ENCODE measurements at regions of chr15 and their contacts with region 1.

Region 1: GRCh38 chr15:31326156-31326732 is 391 bp upstream of the KLF13 start:
- DNase-seq: peak; percentile 100
- H3K4me3 Mint-ChIP-seq: peak overlapping the region; percentile 88
- H3K27ac Mint-ChIP-seq: peak overlapping the region; percentile 80
- H3K4me1 Mint-ChIP-seq: peaks cover 32% of the 10 kb centered on the region
- H3K27me3 Mint-ChIP-seq: no peaks in the 10 kb centered on the region

Region 2: DNA sequence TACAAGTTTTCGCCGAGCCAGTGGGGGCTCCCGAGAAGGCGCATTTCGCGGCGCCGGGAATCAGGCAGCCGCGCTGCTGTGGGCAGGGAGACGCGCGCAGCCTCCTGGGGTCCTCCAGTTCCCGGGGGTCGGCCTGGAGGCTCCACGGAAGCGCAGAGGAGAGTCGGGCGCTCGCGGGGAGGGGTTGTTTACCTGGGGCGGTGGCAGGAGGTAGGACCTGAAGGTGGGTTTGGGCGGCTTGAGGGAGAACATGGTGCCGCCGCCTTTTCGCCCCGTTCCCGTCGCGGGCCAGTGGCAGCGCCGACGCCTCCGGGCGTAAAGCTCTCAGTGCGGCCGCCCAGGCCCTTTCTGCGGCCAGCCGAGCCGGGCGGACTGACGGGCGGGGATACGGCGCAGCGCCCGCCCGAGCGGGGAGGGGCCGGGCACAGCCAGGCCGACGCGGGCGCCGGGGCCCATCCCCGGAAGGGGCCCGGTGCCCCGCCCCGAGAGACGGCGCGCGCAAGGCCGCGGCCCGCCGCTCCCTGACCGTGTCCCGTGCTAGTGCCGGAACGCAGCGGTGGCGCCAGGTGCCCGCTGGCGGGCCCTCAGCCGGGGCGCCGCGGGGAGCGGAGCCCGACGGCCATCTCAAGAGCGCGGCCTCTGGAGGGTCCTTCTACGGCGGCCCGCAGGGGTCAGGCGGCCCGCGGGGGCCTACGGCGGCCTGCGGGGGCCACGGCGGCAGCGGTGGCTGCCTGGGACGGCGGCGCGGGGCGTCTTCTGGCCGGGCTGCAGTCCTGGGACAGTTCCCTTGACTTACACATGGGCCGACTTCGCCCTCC is 334.8 kb before region 1 on chr15 and contains the start of gene MTMR10:
- CTCF ChIA-PET with region 1: no interaction called
- POLR2A ChIA-PET with region 1: no interaction called
- intact Hi-C with region 1: loop called (anchors 10 kb)
- DNase-seq: peak; percentile 76
- H3K4me3 Mint-ChIP-seq: peak within 1 kb of the TSS; percentile 87
- H3K27ac Mint-ChIP-seq: peak within 1 kb of the TSS; percentile 72
- H3K4me1 Mint-ChIP-seq: peaks cover 26% of the 10 kb centered on the region
- H3K27me3 Mint-ChIP-seq: no peaks in the 10 kb centered on the region
- total RNA-seq, gene MTMR10: 10.8 to 12.5 TPM

Region 3: GRCh38 chr15:31215490-31216214 is 110.6 kb before region 1 on chr15:
- CTCF ChIA-PET with region 1: interaction called, 9 read pairs
- POLR2A ChIA-PET with region 1: interaction called, 13 read pairs
- intact Hi-C with region 1: loop called (anchors 1 kb)
- DNase-seq: peak; percentile 88
- H3K4me3 Mint-ChIP-seq: peak overlapping the region; percentile 68
- H3K27ac Mint-ChIP-seq: peak overlapping the region; percentile 56
- H3K4me1 Mint-ChIP-seq: peaks cover 15% of the 10 kb centered on the region
- H3K27me3 Mint-ChIP-seq: no peaks in the 10 kb centered on the region

Region 4: GRCh38 chr15:31265871-31266711 is 60.2 kb before region 1 on chr15:
- CTCF ChIA-PET with region 1: interaction called, 4 read pairs
- POLR2A ChIA-PET with region 1: no interaction called
- intact Hi-C with region 1: loop called (anchors 1 kb)
- DNase-seq: peak; percentile 82
- H3K4me3 Mint-ChIP-seq: peak overlapping the region; percentile 9
- H3K27ac Mint-ChIP-seq: peak overlapping the region; percentile 59
- H3K4me1 Mint-ChIP-seq: peaks cover 68% of the 10 kb centered on the region
- H3K27me3 Mint-ChIP-seq: no peaks in the 10 kb centered on the region

Region 5: DNA sequence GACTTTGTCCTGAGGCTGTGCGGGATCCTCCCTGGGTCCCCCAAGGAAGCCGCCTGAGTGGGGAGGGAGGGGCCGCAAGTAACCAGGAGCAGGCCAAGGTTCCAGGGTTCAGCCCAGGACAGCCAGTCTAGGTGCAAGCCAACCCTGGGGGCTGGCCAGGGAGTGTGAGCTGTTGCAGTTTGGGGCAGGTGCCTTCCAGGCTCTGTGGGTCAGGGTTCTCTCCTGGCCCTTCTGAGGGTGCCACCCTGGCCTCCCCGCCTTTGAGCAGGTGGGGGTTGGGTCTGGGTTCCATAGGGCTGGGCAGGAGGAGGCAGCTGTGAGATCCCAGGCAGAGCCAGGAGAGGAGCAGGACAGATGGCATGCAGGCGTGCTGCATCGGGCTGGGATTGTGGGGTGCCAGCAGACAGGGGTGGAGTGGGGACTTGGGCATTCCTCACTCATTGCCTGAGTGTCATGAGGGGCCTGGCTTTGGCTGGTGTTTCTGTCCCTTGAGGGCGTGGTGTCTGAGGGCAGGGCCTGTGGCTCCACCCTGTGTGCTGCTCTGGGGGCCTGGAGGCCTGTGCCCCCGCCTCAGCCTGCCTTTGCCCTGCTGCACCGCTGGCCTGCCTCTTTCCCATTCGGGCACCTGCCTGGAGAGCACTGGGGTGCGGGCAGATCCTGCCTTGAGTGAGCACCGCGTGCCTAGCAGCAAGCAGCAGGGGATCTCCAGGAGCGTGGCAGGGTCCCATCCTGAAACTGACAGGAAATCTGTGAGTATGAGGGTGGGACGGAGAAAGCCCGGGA is 18.8 kb after region 1 on chr15:
- CTCF ChIA-PET with region 1: interaction called, 8 read pairs
- POLR2A ChIA-PET with region 1: interaction called, 25 read pairs
- intact Hi-C with region 1: loop called (anchors 1 kb)
- DNase-seq: peak; percentile 63
- H3K4me3 Mint-ChIP-seq: peak overlapping the region; percentile 93
- H3K27ac Mint-ChIP-seq: peak overlapping the region; percentile 100
- H3K4me1 Mint-ChIP-seq: peaks cover 98% of the 10 kb centered on the region
- H3K27me3 Mint-ChIP-seq: no peaks in the 10 kb centered on the region

Region 6: DNA sequence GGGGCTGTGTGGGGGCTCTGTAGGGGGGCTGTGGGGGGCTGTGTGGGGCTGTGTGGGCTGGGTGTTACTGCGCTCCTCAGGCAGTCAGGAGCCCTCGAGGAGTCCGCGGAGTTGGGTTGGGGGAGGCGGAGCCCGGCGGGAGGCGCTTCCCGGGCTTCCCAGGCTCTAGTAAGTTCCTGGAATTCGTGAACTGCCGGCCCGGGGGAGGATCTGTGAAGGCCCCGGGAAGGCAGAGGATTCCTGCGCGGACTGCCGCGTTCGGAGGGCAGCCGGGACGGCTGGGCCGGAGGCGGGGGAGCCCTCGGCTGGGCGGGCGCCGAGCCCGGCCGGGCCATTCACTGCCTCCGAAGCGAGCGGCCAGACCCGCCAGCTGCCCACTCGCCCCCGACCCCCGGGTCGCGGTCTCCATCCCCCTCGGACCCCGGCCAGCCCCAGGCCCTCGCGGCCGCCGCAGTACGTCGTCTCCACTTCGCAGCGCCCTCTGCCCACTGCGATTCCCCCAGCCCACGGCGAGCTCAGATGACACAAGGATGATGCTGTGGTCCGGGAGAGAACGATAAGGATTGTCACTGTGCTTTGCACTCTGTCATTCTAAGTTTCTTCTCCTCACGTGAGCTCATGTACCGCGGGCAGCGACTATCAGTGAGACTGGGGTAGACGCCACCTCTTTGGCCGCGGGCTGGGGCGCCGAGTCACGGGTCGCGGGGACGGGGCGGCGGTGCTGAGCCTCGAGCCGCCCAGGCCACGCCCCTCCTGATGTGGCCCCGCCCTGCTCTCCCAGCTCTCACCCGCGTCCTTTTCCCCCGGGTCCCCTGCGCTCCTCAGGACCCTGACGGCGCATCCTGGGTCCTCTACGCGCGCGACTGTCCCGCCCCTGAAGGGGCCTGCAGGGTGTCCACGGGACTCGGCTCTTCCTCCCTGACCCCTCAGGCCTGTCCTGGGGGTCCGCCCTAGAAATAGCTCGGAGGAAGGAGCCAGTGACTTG is 65.7 kb after region 1 on chr15:
- CTCF ChIA-PET with region 1: interaction called, 3 read pairs
- POLR2A ChIA-PET with region 1: interaction called, 5 read pairs
- intact Hi-C with region 1: loop called (anchors 1 kb)
- DNase-seq: peak; percentile 90
- H3K4me3 Mint-ChIP-seq: peak overlapping the region; percentile 87
- H3K27ac Mint-ChIP-seq: peak overlapping the region; percentile 87
- H3K4me1 Mint-ChIP-seq: peaks cover 34% of the 10 kb centered on the region
- H3K27me3 Mint-ChIP-seq: no peaks in the 10 kb centered on the region

Region 7: GRCh38 chr15:31483053-31483985 is 157.1 kb after region 1 on chr15:
- CTCF ChIA-PET with region 1: interaction called, 18 read pairs
- POLR2A ChIA-PET with region 1: interaction called, 3 read pairs
- intact Hi-C with region 1: loop called (anchors 1 kb)
- DNase-seq: peak; percentile 73
- H3K4me3 Mint-ChIP-seq: peak overlapping the region; percentile 92
- H3K27ac Mint-ChIP-seq: peak overlapping the region; percentile 91
- H3K4me1 Mint-ChIP-seq: peaks cover 61% of the 10 kb centered on the region
- H3K27me3 Mint-ChIP-seq: peaks cover 5% of the 10 kb centered on the region